ENCODE measurements at regions of chr5 and their contacts with region 1.

Region 1: GRCh38 chr5:136364307-136364706 is 1.0 kb downstream of the TRPC7 start:
- DNase-seq: no peak
- ATAC-seq: no peak
- H3K4me3 ChIP-seq: no peak overlapping the region
- H3K27ac ChIP-seq: no peak overlapping the region
- H3K4me1 ChIP-seq: no peaks in the 10 kb centered on the region
- H3K27me3 ChIP-seq: no peaks in the 10 kb centered on the region
- CTCF ChIP-seq: peak; percentile 30 to 39 (median 32); a peak in 5 of 6 replicates
- EP300 ChIP-seq: no peak
- POLR2A ChIP-seq: no peak
- RAD21 ChIP-seq: peak; percentile 22; the same call in 1 of the 2 replicates

Region 2: DNA sequence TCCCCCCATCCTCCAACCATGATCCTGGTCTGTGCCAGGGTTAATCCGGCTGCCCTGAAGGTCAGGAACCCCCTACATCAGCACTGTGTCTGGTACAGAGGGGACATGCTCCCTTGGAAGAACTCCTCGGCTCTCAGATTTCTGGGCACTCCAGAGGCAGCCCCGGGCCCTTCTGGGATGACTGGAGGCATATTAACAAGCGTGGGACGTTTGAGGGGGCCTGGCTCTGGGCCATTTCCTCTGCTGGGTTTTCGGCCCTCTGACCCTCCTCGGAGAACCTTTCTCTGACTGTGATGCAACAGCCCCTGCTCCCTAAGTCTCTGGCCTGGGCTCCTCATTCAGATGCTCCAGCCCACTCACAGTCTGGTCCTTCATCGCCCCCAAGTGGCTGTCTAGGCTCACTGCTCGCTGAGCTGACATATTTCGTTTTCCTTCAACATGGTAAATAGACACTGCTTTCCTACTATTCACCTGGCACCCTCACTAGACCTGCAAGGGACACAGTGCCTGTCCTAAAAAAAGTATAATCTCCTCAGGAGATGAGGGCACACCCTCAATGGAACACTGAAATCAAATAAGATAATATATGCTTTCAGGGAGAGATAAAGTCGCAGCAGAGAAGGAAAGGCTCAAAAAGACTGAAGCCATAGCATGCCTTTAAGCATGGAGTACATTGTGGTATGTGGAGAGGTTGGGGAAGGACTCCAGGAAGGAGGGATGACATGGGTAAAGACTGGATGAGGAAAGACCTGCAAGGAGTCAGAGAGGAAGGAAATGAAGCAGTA is 405.8 kb after region 1 on chr5:
- CTCF ChIA-PET with region 1: interaction called, 37 read pairs
- POLR2A ChIA-PET with region 1: no interaction called
- RAD21 ChIA-PET with region 1: interaction called, 3 read pairs
- SMC1A ChIA-PET with region 1: no interaction called
- in situ Hi-C with region 1: no loop called
- intact Hi-C with region 1: loop called (anchors 1 kb)
- DNase-seq: no peak
- ATAC-seq: peak; percentile 89
- H3K4me3 ChIP-seq: no peak overlapping the region
- H3K27ac ChIP-seq: no peak overlapping the region
- H3K4me1 ChIP-seq: no peaks in the 10 kb centered on the region
- H3K27me3 ChIP-seq: no peaks in the 10 kb centered on the region
- CTCF ChIP-seq: peak; percentile 76 to 89 (median 80)
- EP300 ChIP-seq: no peak
- POLR2A ChIP-seq: no peak
- RAD21 ChIP-seq: peak; percentile 82